ENCODE measurements at regions of chr1 and their contacts with region 1.

Region 1: GRCh38 chr1:113072757-113073478 is at the start of gene LRIG2:
- DNase-seq: peak; percentile 92
- H3K4me3 ChIP-seq: peak within 1 kb of the TSS; percentile 99
- CTCF ChIP-seq: peak; percentile 91

Region 2: DNA sequence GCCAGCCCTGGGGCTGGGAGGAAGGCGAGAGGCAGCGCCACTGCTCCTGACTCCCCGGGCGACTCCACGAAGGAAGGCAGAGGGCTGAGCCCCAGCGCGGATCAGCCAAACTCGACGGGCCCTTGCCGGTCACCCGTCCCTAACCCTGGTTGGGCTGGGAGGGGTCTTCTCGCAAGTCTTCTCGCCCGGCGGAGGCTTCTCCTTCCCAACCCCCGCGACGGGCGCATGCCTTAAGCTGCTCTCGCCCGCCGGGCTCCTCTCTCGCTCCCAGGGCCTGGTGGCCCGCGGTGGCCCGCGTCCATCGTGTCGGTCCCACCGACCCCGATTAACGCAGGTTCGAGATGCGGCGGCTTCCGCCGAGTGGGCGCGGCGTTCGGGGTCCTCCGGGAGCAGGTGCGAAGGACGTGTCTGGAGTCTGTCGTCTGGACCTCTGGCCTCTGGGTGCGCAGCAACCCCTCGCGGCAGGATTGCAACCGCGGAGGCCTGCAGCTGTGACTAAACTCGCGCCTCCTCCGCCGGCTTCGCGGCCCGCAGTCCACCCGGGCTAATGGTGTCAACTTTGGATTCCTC is 328.8 kb before region 1 on chr1:
- CTCF ChIA-PET with region 1: interaction called, 11 read pairs
- POLR2A ChIA-PET with region 1: no interaction called
- DNase-seq: no peak
- H3K4me3 ChIP-seq: peak overlapping the region; percentile 37
- CTCF ChIP-seq: peak; percentile 77

Region 3: GRCh38 chr1:112809253-112809684 is 263.6 kb before region 1 on chr1:
- CTCF ChIA-PET with region 1: interaction called, 25 read pairs
- POLR2A ChIA-PET with region 1: no interaction called
- DNase-seq: no peak
- H3K4me3 ChIP-seq: no peak overlapping the region
- CTCF ChIP-seq: peak; percentile 97

Region 4: GRCh38 chr1:112882271-112882744 is 190.6 kb before region 1 on chr1:
- CTCF ChIA-PET with region 1: interaction called, 81 read pairs
- POLR2A ChIA-PET with region 1: no interaction called
- DNase-seq: no peak
- H3K4me3 ChIP-seq: no peak overlapping the region
- CTCF ChIP-seq: no peak

Region 5: DNA sequence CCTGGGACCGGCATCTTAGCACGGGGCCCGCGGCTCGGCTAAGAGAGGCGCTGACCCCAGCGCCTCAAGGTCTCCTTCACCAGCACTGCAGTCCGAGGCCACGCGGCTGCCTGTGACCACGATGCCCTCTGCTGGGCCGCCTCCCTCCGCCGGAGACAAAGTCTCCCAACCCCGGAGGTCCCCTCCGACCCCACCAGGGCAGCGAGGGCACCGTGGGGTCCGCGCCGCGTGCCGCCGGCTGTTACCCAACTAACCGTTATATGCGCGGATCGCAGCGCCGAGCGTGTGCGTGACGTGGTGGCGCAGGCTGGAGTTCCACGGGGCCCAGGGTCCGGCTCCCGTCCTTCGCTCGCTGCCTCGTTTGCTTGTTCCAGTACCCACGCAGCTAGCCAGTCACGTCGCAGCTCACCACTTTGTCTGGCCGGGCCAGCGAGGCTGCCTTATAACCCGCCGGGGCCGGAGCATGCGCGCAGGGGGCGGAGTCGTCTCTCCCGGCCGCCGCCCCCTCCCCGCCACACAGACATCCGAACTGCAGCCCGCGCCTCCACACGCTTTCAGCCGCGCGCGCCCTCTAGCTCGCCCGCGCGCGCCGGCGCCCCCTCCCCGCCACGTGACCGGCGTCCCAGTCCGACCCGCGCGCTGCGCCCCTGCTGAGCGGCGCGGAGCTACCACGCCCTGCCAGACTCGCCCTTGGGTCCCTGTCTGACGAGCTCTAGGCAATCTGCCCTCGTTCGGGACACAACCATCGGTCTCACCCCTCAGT is 117.0 kb before region 1 on chr1 and contains the start of gene SLC16A1:
- CTCF ChIA-PET with region 1: interaction called, 12 read pairs
- POLR2A ChIA-PET with region 1: interaction called, 9 read pairs
- DNase-seq: peak; percentile 63
- H3K4me3 ChIP-seq: peak within 1 kb of the TSS; percentile 95
- CTCF ChIP-seq: peak; percentile 51

Region 6: GRCh38 chr1:113057006-113057405 is 15.9 kb before region 1 on chr1:
- CTCF ChIA-PET with region 1: interaction called, 155 read pairs
- POLR2A ChIA-PET with region 1: no interaction called
- DNase-seq: no peak
- H3K4me3 ChIP-seq: no peak overlapping the region
- CTCF ChIP-seq: no peak

Region 7: GRCh38 chr1:113369040-113369439 is 296.1 kb after region 1 on chr1:
- CTCF ChIA-PET with region 1: no interaction called
- POLR2A ChIA-PET with region 1: no interaction called
- DNase-seq: no peak
- H3K4me3 ChIP-seq: no peak overlapping the region
- CTCF ChIP-seq: no peak

Region 8: DNA sequence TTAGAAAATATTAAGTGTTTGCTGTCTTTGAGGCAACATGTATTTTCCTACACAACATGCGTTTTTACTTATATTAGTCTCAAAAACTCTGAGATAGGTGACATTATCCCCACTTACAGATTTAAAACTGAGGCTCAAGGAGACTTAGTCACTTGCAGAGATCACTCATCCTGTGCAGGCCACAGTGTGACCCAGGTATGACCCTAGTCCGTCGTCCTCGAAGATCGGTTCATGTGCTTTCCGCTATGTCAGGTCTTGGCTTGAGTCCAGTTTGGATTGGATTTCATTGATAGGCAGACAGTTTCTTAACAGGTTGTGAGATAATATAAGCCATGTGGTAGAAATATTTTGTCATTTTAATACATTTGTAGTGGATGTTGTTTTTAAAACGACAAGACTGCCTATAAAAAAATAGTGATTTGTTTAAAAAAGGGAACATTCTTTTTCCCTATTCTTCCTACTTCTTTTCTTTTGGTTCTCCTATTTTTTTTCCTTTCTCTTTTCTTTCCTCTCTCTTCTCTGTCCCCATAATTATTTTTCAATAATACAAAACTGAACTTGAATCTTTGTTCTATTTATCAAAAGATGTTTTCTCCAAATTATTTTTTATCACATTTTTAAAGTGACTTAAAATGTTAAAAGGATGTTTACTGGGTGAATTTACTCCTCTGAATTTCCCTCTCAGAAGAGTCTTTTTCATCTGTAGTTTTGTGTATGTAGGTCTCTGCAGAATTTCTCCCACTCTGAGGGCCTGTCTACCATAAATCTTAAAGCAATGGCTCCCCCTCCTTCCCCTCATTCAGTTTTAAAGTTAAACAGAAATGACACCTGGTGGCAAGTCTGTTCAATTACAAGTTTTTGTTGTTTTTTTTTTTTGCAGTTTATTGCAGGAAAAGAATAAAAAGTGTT is 604.6 kb after region 1 on chr1:
- CTCF ChIA-PET with region 1: interaction called, 13 read pairs
- POLR2A ChIA-PET with region 1: no interaction called
- DNase-seq: no peak
- H3K4me3 ChIP-seq: no peak overlapping the region
- CTCF ChIP-seq: peak; percentile 25

Measured in AG04449 (cell line).